ENCODE measurements at regions of chr13 and their contacts with region 1.

Region 1: DNA sequence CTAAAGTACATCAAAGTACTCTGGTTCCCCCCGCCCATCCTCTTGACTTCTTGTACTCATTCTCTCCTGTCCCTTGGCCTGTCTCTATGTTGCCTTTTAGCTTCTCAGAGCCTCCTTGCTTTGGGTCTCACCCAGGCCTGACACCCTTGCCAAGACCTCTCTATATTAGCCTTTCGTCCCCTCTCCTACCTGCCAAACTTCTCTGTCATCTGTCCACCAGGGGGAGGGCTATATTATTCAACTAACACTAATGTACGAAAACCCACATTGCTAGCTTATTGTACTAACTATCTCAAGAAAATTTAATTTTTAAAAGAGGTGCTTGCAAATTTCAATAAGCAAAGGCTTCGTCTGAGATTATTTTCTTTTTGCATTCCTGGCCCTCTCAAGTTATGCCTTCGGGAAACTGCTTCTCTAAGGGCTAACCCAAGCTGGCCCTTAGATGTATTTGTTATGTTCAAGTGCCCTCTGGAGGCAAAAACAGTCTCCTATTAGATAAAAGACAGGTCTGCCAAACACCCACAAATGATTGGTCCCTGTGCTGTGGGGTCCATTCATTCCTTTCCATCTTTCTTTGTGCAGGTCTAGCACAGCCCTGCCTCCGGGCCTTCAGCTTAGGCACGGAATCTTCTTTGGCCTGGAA is 6.3 kb upstream of the MRPS31 start:
- DNase-seq: peak; percentile 70
- H3K4me3 ChIP-seq: no peak overlapping the region
- H3K27ac ChIP-seq: peak overlapping the region; percentile 27
- H3K4me1 ChIP-seq: peaks cover 9% of the 10 kb centered on the region
- H3K27me3 ChIP-seq: no peaks in the 10 kb centered on the region
- CTCF ChIP-seq: peak; percentile 45 to 55
- POLR2A ChIP-seq: no peak

Region 2: DNA sequence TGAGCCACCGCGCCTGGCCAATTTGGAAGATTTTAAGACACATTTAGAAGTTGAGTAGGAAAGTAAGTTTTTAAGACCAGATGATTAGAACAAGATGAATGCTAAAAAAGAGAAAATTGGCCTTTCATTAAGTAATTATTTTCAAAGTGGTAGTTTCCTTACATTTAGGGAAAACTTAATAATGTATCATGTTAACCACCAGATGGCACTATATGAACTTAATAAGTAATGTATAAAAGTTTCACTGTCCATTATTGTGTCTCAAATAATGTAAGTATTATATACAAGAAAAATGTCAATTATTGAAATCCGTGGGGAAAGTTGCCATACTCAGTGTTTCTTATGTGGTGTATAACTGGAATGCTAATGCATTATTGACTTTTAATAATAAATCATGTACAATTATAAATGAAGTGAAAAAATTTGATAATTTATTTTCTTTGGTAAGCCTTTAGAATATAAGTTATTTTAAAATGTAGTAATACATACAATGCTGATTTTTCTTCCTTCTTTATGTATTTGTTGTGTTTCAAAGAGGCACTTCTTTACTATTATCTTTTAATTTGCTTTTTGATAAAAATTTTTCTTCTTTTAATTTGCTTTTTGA is 1092.7 kb before region 1 on chr13:
- CTCF ChIA-PET with region 1: interaction called, 31 read pairs
- POLR2A ChIA-PET with region 1: no interaction called
- dilution Hi-C with region 1: no loop called
- intact Hi-C with region 1: loop called (anchors 1 kb)
- DNase-seq: peak; percentile 54
- H3K4me3 ChIP-seq: no peak overlapping the region
- H3K27ac ChIP-seq: no peak overlapping the region
- H3K4me1 ChIP-seq: no peaks in the 10 kb centered on the region
- H3K27me3 ChIP-seq: no peaks in the 10 kb centered on the region
- CTCF ChIP-seq: peak in 1 of 2 donors; percentile 8
- POLR2A ChIP-seq: no peak

Region 3: GRCh38 chr13:39765801-39766463 is 1011.4 kb before region 1 on chr13:
- CTCF ChIA-PET with region 1: interaction called, 12 read pairs
- POLR2A ChIA-PET with region 1: no interaction called
- dilution Hi-C with region 1: no loop called
- intact Hi-C with region 1: no loop called
- DNase-seq: peak; percentile 61
- H3K4me3 ChIP-seq: no peak overlapping the region
- H3K27ac ChIP-seq: no peak overlapping the region
- H3K4me1 ChIP-seq: no peaks in the 10 kb centered on the region
- H3K27me3 ChIP-seq: no peaks in the 10 kb centered on the region
- CTCF ChIP-seq: peak; percentile 32 to 45
- POLR2A ChIP-seq: no peak

Region 4: GRCh38 chr13:40789275-40790133 is 12.2 kb after region 1 on chr13 and contains the start of gene SLC25A15:
- CTCF ChIA-PET with region 1: interaction called, 19 read pairs
- POLR2A ChIA-PET with region 1: no interaction called
- dilution Hi-C with region 1: no loop called
- intact Hi-C with region 1: no loop called
- DNase-seq: peak; percentile 82
- H3K4me3 ChIP-seq: peak within 1 kb of the TSS; percentile 57 to 66 (median 58)
- H3K27ac ChIP-seq: peak within 1 kb of the TSS; percentile 37
- H3K4me1 ChIP-seq: peaks cover 11% of the 10 kb centered on the region
- H3K27me3 ChIP-seq: no peaks in the 10 kb centered on the region
- CTCF ChIP-seq: peak; percentile 17 to 31
- POLR2A ChIP-seq: peak; percentile 77
- total RNA-seq, gene SLC25A15: 10.8 and 11.5 TPM in 2 replicates

Region 5: DNA sequence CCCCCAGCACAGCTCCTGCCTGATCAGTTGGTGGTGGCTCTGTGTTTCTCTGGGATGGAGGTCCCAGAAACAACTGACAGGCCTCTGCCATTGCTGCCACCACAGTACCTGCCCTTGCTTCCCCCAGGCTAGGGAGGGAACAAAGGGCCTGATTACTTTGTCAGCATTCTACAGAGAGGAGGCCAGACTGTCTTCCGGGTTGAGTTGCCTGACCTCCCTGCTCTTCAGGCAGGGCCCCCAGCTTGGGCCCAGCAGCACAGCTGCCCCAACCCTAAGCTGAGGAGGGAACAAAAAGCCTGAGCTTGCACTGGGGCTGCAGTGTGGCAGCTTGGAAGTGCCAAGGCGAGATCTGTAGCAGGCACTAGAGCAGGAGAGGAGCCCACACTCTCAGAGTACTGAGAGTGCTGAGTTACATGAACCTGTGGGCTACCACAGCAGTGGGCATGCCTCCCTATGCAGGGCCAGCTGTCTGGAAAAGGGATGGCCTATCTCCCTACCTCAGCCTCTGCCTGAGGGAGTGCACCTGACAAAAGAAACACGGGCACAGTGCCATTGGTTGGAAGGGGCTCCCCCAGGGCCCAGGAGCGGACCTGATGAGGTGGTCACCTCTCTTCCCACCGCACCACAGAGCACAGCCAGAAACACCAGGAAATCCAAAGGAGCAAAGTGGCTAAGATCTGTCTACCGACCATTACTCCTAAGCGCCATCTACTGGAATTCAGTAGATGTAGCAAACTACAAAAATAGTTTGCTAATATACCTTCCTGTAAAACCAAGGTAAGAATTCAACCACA is 36.6 kb after region 1 on chr13:
- CTCF ChIA-PET with region 1: interaction called, 28 read pairs
- POLR2A ChIA-PET with region 1: no interaction called
- dilution Hi-C with region 1: no loop called
- intact Hi-C with region 1: loop called (anchors 1 kb)
- DNase-seq: peak; percentile 16
- H3K4me3 ChIP-seq: no peak overlapping the region
- H3K27ac ChIP-seq: no peak overlapping the region
- H3K4me1 ChIP-seq: no peaks in the 10 kb centered on the region
- H3K27me3 ChIP-seq: peaks cover 0 to 3% of the 10 kb centered on the region in 2 experiments
- CTCF ChIP-seq: peak; percentile 53 to 55
- POLR2A ChIP-seq: no peak

Region 6: DNA sequence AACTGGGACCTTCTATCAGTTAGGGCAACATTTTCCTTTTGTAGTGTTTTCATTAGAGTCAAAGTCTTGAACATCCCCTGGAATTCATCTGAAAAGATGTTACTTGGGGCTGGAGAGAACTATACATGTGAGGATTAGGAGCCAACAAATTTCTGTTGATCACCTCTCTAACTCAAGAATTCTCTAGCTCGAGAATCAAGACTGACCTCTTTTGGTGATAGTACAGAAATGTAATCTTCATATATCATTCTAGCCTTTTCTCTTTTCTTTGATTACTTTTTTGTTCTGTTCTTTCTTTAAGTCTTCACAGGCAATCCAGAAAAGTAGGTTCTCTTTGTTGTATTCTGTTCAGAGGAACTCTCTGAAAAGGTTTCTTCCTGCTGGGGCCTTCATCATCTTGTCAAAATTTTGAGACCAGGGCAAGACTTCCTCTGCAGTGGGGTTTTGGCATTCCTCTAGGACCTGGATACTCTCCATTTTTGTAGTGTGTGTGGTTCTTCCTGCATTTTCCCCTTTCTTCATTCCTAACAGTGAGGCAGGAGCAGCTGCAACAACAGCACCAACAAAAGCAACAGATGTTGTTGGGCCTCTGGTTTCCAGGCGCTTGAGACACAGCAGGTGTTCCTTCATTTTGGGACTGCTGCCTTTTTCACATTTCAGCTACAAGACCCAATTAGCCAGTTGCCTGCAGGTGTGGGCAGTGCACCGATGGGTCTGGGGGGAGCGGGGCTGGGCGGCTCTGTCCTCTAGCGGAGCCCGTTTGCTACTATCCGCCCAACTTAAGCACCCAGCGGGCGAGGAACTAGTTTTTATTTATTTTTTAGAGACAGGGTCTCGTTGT is 215.6 kb after region 1 on chr13:
- CTCF ChIA-PET with region 1: interaction called, 12 read pairs
- POLR2A ChIA-PET with region 1: no interaction called
- dilution Hi-C with region 1: no loop called
- intact Hi-C with region 1: no loop called
- DNase-seq: peak; percentile 28
- H3K4me3 ChIP-seq: no peak overlapping the region
- H3K27ac ChIP-seq: no peak overlapping the region
- H3K4me1 ChIP-seq: no peaks in the 10 kb centered on the region
- H3K27me3 ChIP-seq: no peaks in the 10 kb centered on the region
- CTCF ChIP-seq: no peak
- POLR2A ChIP-seq: no peak

Region 7: GRCh38 chr13:41465241-41465847 is 688.1 kb after region 1 on chr13:
- CTCF ChIA-PET with region 1: no interaction called
- POLR2A ChIA-PET with region 1: no interaction called
- dilution Hi-C with region 1: no loop called
- intact Hi-C with region 1: no loop called
- DNase-seq: peak; percentile 96
- H3K4me3 ChIP-seq: no peak overlapping the region
- H3K27ac ChIP-seq: peak overlapping the region; percentile 86
- H3K4me1 ChIP-seq: peaks cover 37% of the 10 kb centered on the region
- H3K27me3 ChIP-seq: no peaks in the 10 kb centered on the region
- CTCF ChIP-seq: no peak
- POLR2A ChIP-seq: peak; percentile 36